ENCODE measurements at regions of chr3 and their contacts with region 1.

Region 1: DNA sequence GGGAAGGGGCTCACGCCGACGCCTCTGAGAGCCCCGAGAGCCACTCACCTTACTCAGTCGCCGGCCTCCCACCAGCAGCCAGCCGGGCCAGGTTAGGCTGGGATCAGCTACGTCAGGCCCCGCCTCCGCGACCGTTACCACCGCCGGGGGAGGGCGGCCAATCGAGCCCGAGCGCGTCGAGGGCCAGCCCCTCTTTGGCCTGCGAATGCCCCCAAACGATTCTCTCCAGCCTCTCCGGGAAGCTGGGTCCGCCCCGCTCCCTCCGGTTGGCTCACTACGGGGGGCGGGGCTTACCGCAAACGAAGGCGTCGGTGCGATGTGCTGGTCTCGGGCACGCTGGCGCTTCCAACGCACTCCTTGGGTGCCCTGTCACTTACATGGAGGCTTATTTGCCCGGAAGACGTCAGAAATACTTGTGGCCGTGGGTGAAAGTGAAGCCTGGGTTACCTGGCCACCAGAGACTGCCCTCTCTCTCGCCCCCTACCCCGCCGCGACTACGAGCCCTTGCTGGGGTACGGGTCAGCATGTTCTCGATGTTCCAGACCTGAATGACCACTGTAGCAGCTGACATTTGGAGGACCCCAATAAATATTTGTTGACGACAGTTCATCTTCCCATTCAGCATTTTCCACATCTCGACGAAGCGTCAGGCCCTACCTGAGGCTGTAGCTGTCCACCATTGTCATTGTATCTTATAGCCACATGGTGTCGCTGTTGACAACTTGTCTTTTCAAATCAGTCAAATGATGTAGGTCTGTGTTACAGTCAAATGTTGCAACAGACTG is at the start of gene CEP70:
- DNase-seq: peak; percentile 98
- H3K4me3 ChIP-seq: peak within 1 kb of the TSS; percentile 67 to 75 (median 70)
- H3K27ac ChIP-seq: peak within 1 kb of the TSS; percentile 89 to 98 (median 89)
- H3K4me1 ChIP-seq: peaks cover 5 to 18% (median 13%) of the 10 kb centered on the region in 4 donors
- H3K27me3 ChIP-seq: no peaks in the 10 kb centered on the region
- CTCF ChIP-seq: peak; percentile 83 to 92 (median 86)
- EP300 ChIP-seq: no peak
- POLR2A ChIP-seq: peak; percentile 82
- total RNA-seq, gene CEP70: 25.5 to 54.4 (median 39.0) TPM

Region 2: GRCh38 chr3:138338811-138339210 is 255.5 kb before region 1 on chr3:
- intact Hi-C with region 1: no loop called
- DNase-seq: no peak
- H3K4me3 ChIP-seq: no peak overlapping the region
- H3K27ac ChIP-seq: no peak overlapping the region
- H3K4me1 ChIP-seq: no peaks in the 10 kb centered on the region
- H3K27me3 ChIP-seq: no peaks in the 10 kb centered on the region
- CTCF ChIP-seq: no peak
- EP300 ChIP-seq: no peak
- POLR2A ChIP-seq: no peak

Region 3: GRCh38 chr3:138608322-138609135 is 14.2 kb after region 1 on chr3 and contains the start of gene FAIM:
- intact Hi-C with region 1: loop called (anchors 1 kb)
- DNase-seq: peak; percentile 92
- H3K4me3 ChIP-seq: peak within 1 kb of the TSS; percentile 76 to 87 (median 80)
- H3K27ac ChIP-seq: peak within 1 kb of the TSS; percentile 93 to 97 (median 97)
- H3K4me1 ChIP-seq: peaks cover 10 to 14% (median 13%) of the 10 kb centered on the region in 4 donors
- H3K27me3 ChIP-seq: peaks cover 0 to 4% (median 0%) of the 10 kb centered on the region in 4 donors
- CTCF ChIP-seq: no peak
- EP300 ChIP-seq: no peak
- POLR2A ChIP-seq: no peak
- total RNA-seq, gene FAIM: 8.3 to 12.3 (median 9.3) TPM

Region 4: GRCh38 chr3:138694287-138695007 is 100.1 kb after region 1 on chr3:
- intact Hi-C with region 1: loop called (anchors 10 kb)
- DNase-seq: no peak
- H3K4me3 ChIP-seq: no peak overlapping the region
- H3K27ac ChIP-seq: no peak overlapping the region
- H3K4me1 ChIP-seq: peaks cover 0 to 9% (median 0%) of the 10 kb centered on the region in 4 donors
- H3K27me3 ChIP-seq: no peaks in the 10 kb centered on the region
- CTCF ChIP-seq: no peak
- EP300 ChIP-seq: no peak
- POLR2A ChIP-seq: no peak

Region 5: GRCh38 chr3:138786788-138787278 is 192.5 kb after region 1 on chr3:
- intact Hi-C with region 1: no loop called
- DNase-seq: no peak
- H3K4me3 ChIP-seq: no peak overlapping the region
- H3K27ac ChIP-seq: no peak overlapping the region
- H3K4me1 ChIP-seq: peaks cover 0 to 3% (median 0%) of the 10 kb centered on the region in 4 donors
- H3K27me3 ChIP-seq: no peaks in the 10 kb centered on the region
- CTCF ChIP-seq: no peak
- EP300 ChIP-seq: no peak
- POLR2A ChIP-seq: no peak

Region 6: GRCh38 chr3:138850151-138850550 is 255.8 kb after region 1 on chr3:
- intact Hi-C with region 1: no loop called
- DNase-seq: no peak
- H3K4me3 ChIP-seq: no peak overlapping the region
- H3K27ac ChIP-seq: no peak overlapping the region
- H3K4me1 ChIP-seq: no peaks in the 10 kb centered on the region
- H3K27me3 ChIP-seq: no peaks in the 10 kb centered on the region
- CTCF ChIP-seq: no peak
- EP300 ChIP-seq: no peak
- POLR2A ChIP-seq: no peak

Region 7: GRCh38 chr3:138915503-138916498 is 321.5 kb after region 1 on chr3:
- intact Hi-C with region 1: loop called (anchors 1 kb)
- DNase-seq: peak; percentile 97
- H3K4me3 ChIP-seq: peak overlapping the region; percentile 61 to 88 (median 82)
- H3K27ac ChIP-seq: peak overlapping the region; percentile 87 to 96 (median 94)
- H3K4me1 ChIP-seq: peaks cover 0 to 20% (median 15%) of the 10 kb centered on the region in 4 donors
- H3K27me3 ChIP-seq: no peaks in the 10 kb centered on the region
- CTCF ChIP-seq: peak; percentile 84 to 90 (median 88)
- EP300 ChIP-seq: no peak
- POLR2A ChIP-seq: no peak

Region 8: GRCh38 chr3:139062915-139063314 is 468.6 kb after region 1 on chr3:
- intact Hi-C with region 1: no loop called
- DNase-seq: no peak
- H3K4me3 ChIP-seq: no peak overlapping the region
- H3K27ac ChIP-seq: no peak overlapping the region
- H3K4me1 ChIP-seq: no peaks in the 10 kb centered on the region
- H3K27me3 ChIP-seq: no peaks in the 10 kb centered on the region
- CTCF ChIP-seq: no peak
- EP300 ChIP-seq: no peak
- POLR2A ChIP-seq: no peak